ENCODE measurements at regions of chr1 and their contacts with region 1.

Region 1: GRCh38 chr1:176206961-176207902 is at the start of gene COP1:
- DNase-seq: peak; percentile 97 to 98
- ATAC-seq: peak; percentile 96 to 99 (median 98)
- H3K4me3 ChIP-seq: peak within 1 kb of the TSS; percentile 67 to 98 (median 88)
- H3K27ac ChIP-seq: peak within 1 kb of the TSS; percentile 90 to 99 (median 96)
- H3K4me1 ChIP-seq: peaks cover 3 to 58% (median 37%) of the 10 kb centered on the region in 9 donors
- H3K27me3 ChIP-seq: no peaks in the 10 kb centered on the region
- CTCF ChIP-seq: peak in 4 of 9 donors; percentile 9 to 33 (median 17)
- total RNA-seq, gene COP1: 17.9 to 28.1 (median 23.0) TPM

Region 2: GRCh38 chr1:176122282-176122681 is 85.0 kb before region 1 on chr1:
- intact Hi-C with region 1: loop called in 1 of 10 experiments (anchors 10 kb)
- DNase-seq: no peak
- ATAC-seq: no peak
- H3K4me3 ChIP-seq: no peak overlapping the region
- H3K27ac ChIP-seq: no peak overlapping the region
- H3K4me1 ChIP-seq: no peaks in the 10 kb centered on the region
- H3K27me3 ChIP-seq: no peaks in the 10 kb centered on the region
- CTCF ChIP-seq: no peak

Region 3: GRCh38 chr1:176157995-176158394 is 49.2 kb before region 1 on chr1:
- intact Hi-C with region 1: loop called in 1 of 10 experiments (anchors 1 kb)
- DNase-seq: no peak
- ATAC-seq: no peak
- H3K4me3 ChIP-seq: no peak overlapping the region
- H3K27ac ChIP-seq: no peak overlapping the region
- H3K4me1 ChIP-seq: no peaks in the 10 kb centered on the region
- H3K27me3 ChIP-seq: no peaks in the 10 kb centered on the region
- CTCF ChIP-seq: no peak

Measured in heart right ventricle (tissue), 16 donors.